ENCODE measurements at regions of chr20 and their contacts with region 1.

Region 1: DNA sequence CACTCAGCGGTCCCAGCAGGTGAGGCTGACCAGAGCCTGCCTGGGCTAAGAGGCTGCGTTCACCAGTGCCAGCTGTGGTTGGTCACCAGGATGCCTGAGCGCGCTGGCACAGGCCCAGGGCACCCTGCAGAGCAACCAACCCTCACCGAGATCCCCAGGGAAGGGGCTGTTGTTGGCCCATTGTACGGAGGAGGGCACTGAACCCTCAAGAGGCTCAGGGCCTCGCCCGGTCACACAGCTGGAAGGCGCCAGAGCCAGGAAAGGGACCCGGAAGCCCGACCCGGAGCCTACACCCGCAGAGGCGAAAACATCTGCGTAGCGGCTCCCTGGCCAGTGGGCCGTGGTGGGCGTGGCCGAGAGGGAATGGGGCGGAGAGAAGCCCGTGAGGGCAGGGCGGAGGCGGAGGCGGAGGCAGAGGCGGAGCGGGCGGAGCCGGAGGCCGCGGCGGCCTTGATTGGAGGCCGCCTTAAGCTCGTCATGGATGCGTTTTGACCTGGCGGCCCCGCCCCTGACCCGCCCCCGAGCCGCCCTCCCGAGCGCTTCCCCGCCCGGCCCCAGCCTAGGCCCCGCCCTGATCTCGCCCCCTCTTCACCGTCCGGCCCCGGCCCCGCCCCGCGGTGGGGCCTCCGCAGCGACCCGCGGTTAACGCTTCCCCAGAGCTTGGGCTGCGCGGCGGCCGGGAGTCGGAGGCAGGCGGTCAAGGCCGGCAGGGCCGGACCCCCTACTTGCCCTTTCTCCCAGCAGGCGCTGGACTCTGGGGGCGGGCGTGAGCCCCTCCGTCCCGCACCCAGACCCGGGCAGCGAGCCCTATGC is 2.2 kb upstream of the MRGBP start:
- DNase-seq: peak; percentile 87 to 98 (median 95)
- ATAC-seq: peak; percentile 71
- H3K4me3 ChIP-seq: peak overlapping the region; percentile 78
- H3K4me3 Mint-ChIP-seq: peak overlapping the region; percentile 88
- H3K27ac ChIP-seq: peak overlapping the region; percentile 79 to 90
- H3K27ac Mint-ChIP-seq: peak overlapping the region; percentile 89
- H3K4me1 ChIP-seq: peaks cover 56% of the 10 kb centered on the region
- H3K4me1 Mint-ChIP-seq: peaks cover 55% of the 10 kb centered on the region
- H3K27me3 ChIP-seq: no peaks in the 10 kb centered on the region
- H3K27me3 Mint-ChIP-seq: no peaks in the 10 kb centered on the region
- CTCF ChIP-seq: no peak

Region 2: DNA sequence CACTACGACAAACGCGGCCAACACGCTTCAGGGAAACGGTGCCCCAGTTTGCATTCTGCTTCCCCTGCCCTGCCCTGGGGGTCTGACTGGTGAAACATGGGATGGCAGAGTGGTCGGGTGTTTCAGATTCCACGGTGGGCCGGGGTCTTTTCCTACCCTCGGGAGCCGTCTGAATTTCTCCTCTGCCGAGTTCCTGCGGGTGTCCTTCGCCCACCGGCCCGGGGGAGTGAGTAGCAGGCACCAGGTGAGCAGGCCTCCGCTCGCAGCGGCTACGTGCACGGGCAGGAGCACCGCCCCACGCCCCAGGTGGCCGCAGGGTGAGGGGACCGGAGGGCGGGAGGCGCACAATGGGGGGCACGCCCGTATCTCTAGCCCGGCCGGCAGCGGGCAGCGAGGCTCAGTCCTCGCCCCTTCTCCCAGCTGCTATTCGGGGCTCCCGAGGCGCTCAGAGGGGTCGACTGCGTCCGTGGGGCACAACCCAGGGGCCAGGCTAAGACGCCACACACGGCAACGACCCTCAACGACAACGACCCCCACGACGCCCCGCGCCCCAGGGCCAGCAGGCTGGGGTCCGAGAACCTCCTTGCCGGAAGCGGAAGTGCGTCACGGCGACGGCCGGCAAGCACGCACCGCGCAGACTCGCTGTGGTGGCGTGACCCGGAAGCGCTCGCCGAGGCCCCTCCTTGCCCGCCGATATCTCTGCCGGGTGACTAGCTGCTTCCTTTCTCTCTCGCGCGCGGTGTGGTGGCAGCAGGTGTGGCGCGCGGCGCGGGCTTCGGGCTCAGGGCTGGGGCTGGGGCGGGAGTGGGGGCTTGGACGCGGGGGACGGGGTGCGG is 407.5 kb before region 1 on chr20 and contains the start of gene RPS21:
- CTCF ChIA-PET with region 1: no interaction called
- POLR2A ChIA-PET with region 1: no interaction called
- intact Hi-C with region 1: loop called in 1 of 2 experiments (anchors 10 kb)
- DNase-seq: peak; percentile 89 to 97 (median 92)
- ATAC-seq: peak; percentile 87
- H3K4me3 ChIP-seq: peak within 1 kb of the TSS; percentile 91
- H3K4me3 Mint-ChIP-seq: peak within 1 kb of the TSS; percentile 95
- H3K27ac ChIP-seq: peak within 1 kb of the TSS; percentile 84 to 94
- H3K27ac Mint-ChIP-seq: peak within 1 kb of the TSS; percentile 91
- H3K4me1 ChIP-seq: peaks cover 39% of the 10 kb centered on the region
- H3K4me1 Mint-ChIP-seq: peaks cover 58% of the 10 kb centered on the region
- H3K27me3 ChIP-seq: no peaks in the 10 kb centered on the region
- H3K27me3 Mint-ChIP-seq: no peaks in the 10 kb centered on the region
- CTCF ChIP-seq: no peak
- total RNA-seq, gene RPS21: 3,015 to 3,210 TPM

Region 3: DNA sequence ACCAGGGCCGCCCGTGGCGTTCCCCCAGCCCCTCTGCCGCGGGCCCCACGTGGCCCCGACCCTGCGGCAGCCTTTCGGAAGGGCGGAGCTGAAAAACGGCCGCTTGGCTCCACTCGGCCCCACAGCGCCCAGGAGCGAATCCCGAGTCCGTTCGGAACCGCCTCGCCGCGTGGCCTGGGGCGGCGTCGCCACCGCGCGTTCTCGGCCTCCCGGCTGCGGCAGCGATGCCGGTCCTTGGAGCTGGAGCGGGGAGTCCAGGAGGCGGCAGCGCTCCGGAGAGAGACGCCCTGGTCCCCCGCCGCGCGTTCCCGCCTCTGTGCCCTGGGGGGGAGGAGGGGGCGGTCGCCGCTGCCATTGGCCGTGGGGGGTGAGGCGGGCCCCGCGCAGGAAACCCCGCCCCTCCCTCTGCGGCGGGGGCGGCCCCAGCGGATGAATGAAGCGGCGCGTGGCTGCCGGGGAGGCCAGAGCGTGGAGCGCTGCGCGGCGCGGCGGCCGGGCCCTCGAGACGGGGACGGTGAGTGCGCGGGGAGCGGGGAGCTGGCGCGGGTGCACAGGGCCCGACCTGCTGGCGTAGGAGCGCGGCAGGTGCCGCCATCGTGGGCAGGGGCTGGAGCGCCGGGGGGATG is 152.0 kb before region 1 on chr20 and contains the start of gene SLCO4A1:
- CTCF ChIA-PET with region 1: interaction called, 5 read pairs
- POLR2A ChIA-PET with region 1: interaction called, 4 read pairs
- intact Hi-C with region 1: loop called in 1 of 2 experiments (anchors 2 kb)
- DNase-seq: peak; percentile 69 to 92 (median 82)
- ATAC-seq: peak; percentile 94
- H3K4me3 ChIP-seq: peak within 1 kb of the TSS; percentile 43
- H3K4me3 Mint-ChIP-seq: peak within 1 kb of the TSS; percentile 88
- H3K27ac ChIP-seq: no peak within 1 kb of the TSS
- H3K27ac Mint-ChIP-seq: no peak within 1 kb of the TSS
- H3K4me1 ChIP-seq: peaks cover 37% of the 10 kb centered on the region
- H3K4me1 Mint-ChIP-seq: no peaks in the 10 kb centered on the region
- H3K27me3 ChIP-seq: no peaks in the 10 kb centered on the region
- H3K27me3 Mint-ChIP-seq: no peaks in the 10 kb centered on the region
- CTCF ChIP-seq: no peak
- total RNA-seq, gene SLCO4A1: 2.3 to 2.5 TPM

Region 4: DNA sequence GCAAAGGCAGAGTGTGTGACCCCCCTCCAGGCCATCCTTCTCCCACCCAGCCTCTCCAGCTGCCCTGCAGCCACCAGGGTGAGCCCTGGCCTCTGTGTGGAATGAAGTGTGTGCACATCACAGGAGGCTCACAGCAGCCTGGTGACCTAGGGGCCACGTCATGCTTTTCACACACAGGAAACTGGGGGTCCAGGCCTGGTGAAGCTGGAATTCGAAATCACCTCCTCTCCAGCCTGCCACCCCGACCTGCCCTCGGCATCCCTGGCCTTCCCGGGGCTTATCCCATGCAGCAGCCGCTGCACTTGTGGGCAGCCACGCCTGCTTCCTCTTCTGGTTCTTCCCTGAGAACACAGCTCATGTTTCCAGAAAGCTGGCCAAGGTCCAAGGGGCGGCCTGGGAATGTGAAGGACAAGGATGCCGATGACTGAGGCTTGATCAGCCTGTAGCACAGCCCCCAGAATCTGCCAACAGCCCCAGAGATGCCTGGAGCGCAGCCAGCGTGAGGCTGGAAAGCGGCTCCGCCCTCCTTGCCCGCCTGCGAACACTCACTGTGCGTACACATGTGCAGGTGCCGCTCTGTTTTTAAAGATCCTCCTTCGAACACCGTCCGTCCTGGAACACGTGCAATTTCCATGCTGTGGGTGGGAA is 89.7 kb before region 1 on chr20:
- CTCF ChIA-PET with region 1: no interaction called
- POLR2A ChIA-PET with region 1: interaction called, 17 read pairs
- intact Hi-C with region 1: loop called in 1 of 2 experiments (anchors 5 kb)
- DNase-seq: no peak
- ATAC-seq: no peak
- H3K4me3 ChIP-seq: no peak overlapping the region
- H3K4me3 Mint-ChIP-seq: no peak overlapping the region
- H3K27ac ChIP-seq: no peak overlapping the region
- H3K27ac Mint-ChIP-seq: no peak overlapping the region
- H3K4me1 ChIP-seq: peaks cover 20% of the 10 kb centered on the region
- H3K4me1 Mint-ChIP-seq: peaks cover 4% of the 10 kb centered on the region
- H3K27me3 ChIP-seq: peaks cover 11 to 15% of the 10 kb centered on the region in 2 experiments
- H3K27me3 Mint-ChIP-seq: peaks cover 14% of the 10 kb centered on the region
- CTCF ChIP-seq: no peak

Region 5: DNA sequence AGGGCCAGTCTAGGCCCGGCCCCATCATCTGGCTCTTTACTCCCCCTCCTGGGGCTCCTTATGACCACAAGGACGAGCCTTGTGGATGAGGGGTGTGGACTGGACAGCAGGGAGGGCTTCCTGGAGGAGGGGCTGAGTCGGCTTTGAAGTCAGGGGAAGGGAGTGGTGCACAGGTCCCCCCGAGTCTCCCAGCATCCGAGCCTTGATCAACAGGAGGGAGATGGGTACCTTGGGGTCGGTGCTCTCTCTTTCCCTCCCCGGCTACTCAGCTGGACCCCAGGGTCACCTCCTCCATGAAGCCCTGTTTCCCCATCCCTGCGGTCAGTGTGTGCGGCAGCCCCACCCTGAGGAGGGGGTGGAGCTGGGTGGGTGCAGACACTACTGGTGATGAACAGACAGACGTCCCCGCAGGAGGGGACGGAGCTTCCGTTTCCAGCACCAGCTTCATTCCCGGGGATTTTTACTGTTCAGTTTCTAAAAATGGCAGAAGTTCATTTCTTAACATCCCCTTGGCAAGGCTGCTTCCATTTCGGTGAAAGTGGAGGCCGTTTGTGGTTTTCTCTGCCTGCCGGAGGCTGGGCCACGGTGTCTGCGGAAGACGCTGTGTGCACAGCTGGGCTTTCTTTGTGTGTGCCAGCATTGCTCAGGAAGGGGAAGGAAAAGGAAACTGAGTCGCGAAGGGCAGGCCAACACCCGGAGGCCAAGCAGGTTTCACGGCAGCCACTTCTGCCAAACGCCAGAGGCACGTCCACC is 65.9 kb before region 1 on chr20:
- CTCF ChIA-PET with region 1: no interaction called
- POLR2A ChIA-PET with region 1: interaction called, 4 read pairs
- intact Hi-C with region 1: loop called in 1 of 2 experiments (anchors 5 kb)
- DNase-seq: peak in 4 of 14 experiments; percentile 31 to 51 (median 42)
- ATAC-seq: peak; percentile 58
- H3K4me3 ChIP-seq: peak overlapping the region; percentile 20
- H3K4me3 Mint-ChIP-seq: peak overlapping the region; percentile 82
- H3K27ac ChIP-seq: no peak overlapping the region
- H3K27ac Mint-ChIP-seq: peak overlapping the region; percentile 84
- H3K4me1 ChIP-seq: peaks cover 27% of the 10 kb centered on the region
- H3K4me1 Mint-ChIP-seq: peaks cover 25% of the 10 kb centered on the region
- H3K27me3 ChIP-seq: no peaks in the 10 kb centered on the region
- H3K27me3 Mint-ChIP-seq: no peaks in the 10 kb centered on the region
- CTCF ChIP-seq: no peak

Region 6: GRCh38 chr20:62782149-62782892 is 11.8 kb before region 1 on chr20:
- CTCF ChIA-PET with region 1: no interaction called
- POLR2A ChIA-PET with region 1: interaction called, 12 read pairs
- intact Hi-C with region 1: loop called (anchors 1 to 2 kb)
- DNase-seq: no peak
- ATAC-seq: no peak
- H3K4me3 ChIP-seq: no peak overlapping the region
- H3K4me3 Mint-ChIP-seq: no peak overlapping the region
- H3K27ac ChIP-seq: no peak overlapping the region
- H3K27ac Mint-ChIP-seq: no peak overlapping the region
- H3K4me1 ChIP-seq: peaks cover 11% of the 10 kb centered on the region
- H3K4me1 Mint-ChIP-seq: peaks cover 13% of the 10 kb centered on the region
- H3K27me3 ChIP-seq: no peaks in the 10 kb centered on the region
- H3K27me3 Mint-ChIP-seq: no peaks in the 10 kb centered on the region
- CTCF ChIP-seq: no peak

Region 7: GRCh38 chr20:62861726-62862336 is 67.7 kb after region 1 on chr20 and contains the start of gene TCFL5:
- CTCF ChIA-PET with region 1: no interaction called
- POLR2A ChIA-PET with region 1: interaction called, 20 read pairs
- intact Hi-C with region 1: no loop called
- DNase-seq: peak; percentile 88 to 98 (median 92)
- ATAC-seq: peak; percentile 87
- H3K4me3 ChIP-seq: peak within 1 kb of the TSS; percentile 39
- H3K4me3 Mint-ChIP-seq: peak within 1 kb of the TSS; percentile 83
- H3K27ac ChIP-seq: peak within 1 kb of the TSS in 1 of 2 donors; percentile 21
- H3K27ac Mint-ChIP-seq: peak within 1 kb of the TSS; percentile 83
- H3K4me1 ChIP-seq: peaks cover 13% of the 10 kb centered on the region
- H3K4me1 Mint-ChIP-seq: peaks cover 27% of the 10 kb centered on the region
- H3K27me3 ChIP-seq: no peaks in the 10 kb centered on the region
- H3K27me3 Mint-ChIP-seq: no peaks in the 10 kb centered on the region
- CTCF ChIP-seq: no peak
- total RNA-seq, gene TCFL5: 5.9 to 6.3 TPM